Posterior vena cava (tissue), 2 donors: ENCODE measurements at regions of chr6 and their contacts with region 1.

Region 1: DNA sequence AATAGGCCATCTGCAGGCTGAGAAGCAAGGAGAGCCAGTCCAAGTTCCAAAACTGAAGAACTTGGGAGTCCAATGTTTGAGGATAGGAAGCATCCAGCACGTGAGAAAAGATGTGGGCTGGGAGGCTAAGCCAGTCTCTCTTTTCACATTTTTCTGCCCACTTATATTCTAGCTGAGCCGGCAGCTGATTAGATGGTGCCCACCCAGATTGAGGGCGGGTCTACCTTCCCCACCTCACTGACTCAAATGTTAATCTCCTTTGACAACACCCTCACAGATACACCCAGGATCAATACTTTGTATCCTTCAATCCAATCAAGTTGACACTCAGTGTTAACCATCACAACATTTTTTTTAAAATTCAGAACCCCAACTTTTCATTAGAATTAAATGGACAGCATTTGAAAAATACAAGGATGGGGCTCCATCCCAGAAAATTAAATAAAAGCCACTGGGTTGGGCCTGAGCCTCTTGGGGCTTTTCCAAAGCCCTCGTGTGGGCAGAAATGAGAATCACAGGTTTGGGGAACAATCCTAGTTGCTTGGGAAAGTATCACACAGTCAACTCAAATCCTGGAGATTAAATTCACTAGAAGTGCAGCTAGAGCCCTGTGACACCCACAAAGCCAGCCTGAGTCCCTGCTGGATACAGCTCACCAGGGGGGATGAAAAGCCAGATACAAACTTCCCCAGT is 2.2 kb downstream of the CLDN20 start:
- DNase-seq: no peak

Region 2: GRCh38 chr6:155228546-155229166 is 37.3 kb before region 1 on chr6:
- intact Hi-C with region 1: loop called in 1 of 2 experiments (anchors 2 kb)
- DNase-seq: no peak

Region 3: DNA sequence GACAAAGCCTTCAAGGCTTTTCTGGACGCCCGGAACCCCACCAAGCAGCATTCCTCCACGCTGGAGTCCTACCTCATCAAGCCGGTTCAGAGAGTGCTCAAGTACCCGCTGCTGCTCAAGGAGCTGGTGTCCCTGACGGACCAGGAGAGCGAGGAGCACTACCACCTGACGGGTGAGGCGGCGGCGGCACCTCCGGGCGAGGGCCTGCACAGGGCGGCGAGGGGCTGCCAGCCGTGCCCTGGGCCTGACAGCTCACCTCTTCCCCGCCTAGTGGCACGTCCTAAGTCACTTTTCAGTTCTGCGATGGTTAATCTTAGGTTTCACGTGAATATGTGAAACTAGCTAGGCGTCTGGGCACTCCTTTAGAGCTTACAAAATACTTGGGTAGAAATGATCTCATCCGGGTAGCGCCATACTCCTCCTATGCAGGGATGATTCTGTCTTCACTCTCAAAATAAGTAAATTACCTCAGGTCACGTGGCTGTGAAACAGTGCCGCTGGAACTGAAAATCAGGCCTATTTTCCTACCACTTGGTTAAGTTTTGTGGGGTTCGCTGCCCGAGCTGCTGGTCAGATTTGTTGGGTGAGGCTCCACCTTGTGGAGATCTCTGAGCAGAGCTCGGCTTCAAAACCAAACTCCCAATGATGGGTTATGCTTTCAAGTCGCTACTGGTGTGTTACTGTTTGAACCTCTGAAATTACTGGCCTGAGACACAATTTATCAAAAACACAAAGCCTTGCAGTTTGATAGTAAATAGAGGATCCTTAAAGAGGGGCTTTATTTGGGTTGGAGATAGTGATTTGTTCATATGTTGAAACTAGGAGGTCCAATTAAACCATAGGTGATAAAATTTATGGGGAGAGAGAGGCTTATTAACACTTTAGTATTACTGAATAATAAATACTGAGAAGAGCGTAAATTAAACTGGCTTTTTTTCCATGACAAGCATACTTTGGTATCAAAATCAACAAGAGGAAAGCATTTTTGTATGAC is 17.7 kb before region 1 on chr6:
- intact Hi-C with region 1: no loop called
- DNase-seq: no peak